Caco-2 (cell line): ENCODE measurements at regions of chr9 and their contacts with region 1.

Region 1: DNA sequence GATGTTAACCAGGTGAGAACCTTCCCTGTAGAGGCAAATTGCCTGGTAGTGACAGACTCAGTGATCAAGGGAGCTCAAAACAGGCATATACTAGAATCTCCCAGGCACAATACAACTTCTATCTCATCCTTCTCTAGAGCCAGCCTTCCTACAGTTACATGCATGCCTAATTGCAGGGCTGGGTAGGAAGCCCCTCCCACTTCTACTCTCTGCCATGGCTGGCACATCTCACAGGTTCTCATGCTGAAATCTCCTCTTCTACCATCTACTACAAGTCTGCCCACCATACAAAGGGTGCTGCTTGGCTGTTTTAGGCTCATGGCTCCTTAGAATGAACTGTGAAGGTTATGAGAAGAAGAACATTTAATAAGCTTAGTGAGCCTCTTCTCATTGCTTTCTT is 181.7 kb upstream of the ZNF462 start:
- DNase-seq: no peak
- H3K4me3 ChIP-seq: no peak overlapping the region
- H3K4me3 Mint-ChIP-seq: no peak overlapping the region
- H3K27ac Mint-ChIP-seq: no peak overlapping the region
- H3K4me1 ChIP-seq: 0 out of 2 replicates have a peak, but pooled peaks cover 6% of the 10 kb centered on the region
- H3K4me1 Mint-ChIP-seq: peaks cover 6% of the 10 kb centered on the region
- H3K27me3 ChIP-seq: no peaks in the 10 kb centered on the region
- H3K27me3 Mint-ChIP-seq: no peaks in the 10 kb centered on the region
- CTCF ChIP-seq: no peak

Region 2: GRCh38 chr9:106482733-106483132 is 198.6 kb before region 1 on chr9:
- CTCF ChIA-PET with region 1: no interaction called
- POLR2A ChIA-PET with region 1: no interaction called
- intact Hi-C with region 1: no loop called
- DNase-seq: no peak
- H3K4me3 ChIP-seq: no peak overlapping the region
- H3K4me3 Mint-ChIP-seq: no peak overlapping the region
- H3K27ac Mint-ChIP-seq: no peak overlapping the region
- H3K4me1 ChIP-seq: no peaks in the 10 kb centered on the region
- H3K4me1 Mint-ChIP-seq: no peaks in the 10 kb centered on the region
- H3K27me3 ChIP-seq: no peaks in the 10 kb centered on the region
- H3K27me3 Mint-ChIP-seq: no peaks in the 10 kb centered on the region
- CTCF ChIP-seq: no peak

Region 3: DNA sequence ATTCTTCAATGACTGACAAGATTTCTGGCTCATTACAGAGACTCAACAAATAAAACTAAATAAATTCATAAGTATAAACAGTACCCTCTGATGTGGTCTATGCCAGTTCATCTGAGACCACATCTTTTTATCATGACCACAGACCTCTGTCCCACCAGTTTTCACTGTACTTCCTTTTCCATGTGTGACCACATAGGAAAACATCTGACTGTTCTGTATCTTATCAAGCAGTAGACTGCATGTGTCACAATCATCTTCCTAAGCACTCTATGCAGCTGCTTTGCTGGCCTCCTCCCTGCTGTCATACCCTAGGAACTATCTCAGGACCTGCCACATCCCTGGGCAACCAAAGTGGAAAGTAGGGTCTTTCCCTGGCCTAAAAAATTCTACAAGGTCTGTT is 23.4 kb before region 1 on chr9:
- CTCF ChIA-PET with region 1: no interaction called
- POLR2A ChIA-PET with region 1: interaction called, 12 read pairs
- intact Hi-C with region 1: no loop called
- DNase-seq: no peak
- H3K4me3 ChIP-seq: no peak overlapping the region
- H3K4me3 Mint-ChIP-seq: no peak overlapping the region
- H3K27ac Mint-ChIP-seq: no peak overlapping the region
- H3K4me1 ChIP-seq: peaks cover 8% of the 10 kb centered on the region; the same call in 1 of the 2 replicates
- H3K4me1 Mint-ChIP-seq: peaks cover 21% of the 10 kb centered on the region
- H3K27me3 ChIP-seq: no peaks in the 10 kb centered on the region
- H3K27me3 Mint-ChIP-seq: peaks cover 2% of the 10 kb centered on the region
- CTCF ChIP-seq: no peak

Region 4: GRCh38 chr9:106700676-106701075 is 19.4 kb after region 1 on chr9:
- CTCF ChIA-PET with region 1: no interaction called
- POLR2A ChIA-PET with region 1: no interaction called
- intact Hi-C with region 1: no loop called
- DNase-seq: no peak
- H3K4me3 ChIP-seq: no peak overlapping the region
- H3K4me3 Mint-ChIP-seq: no peak overlapping the region
- H3K27ac Mint-ChIP-seq: no peak overlapping the region
- H3K4me1 ChIP-seq: no peaks in the 10 kb centered on the region
- H3K4me1 Mint-ChIP-seq: no peaks in the 10 kb centered on the region
- H3K27me3 ChIP-seq: no peaks in the 10 kb centered on the region
- H3K27me3 Mint-ChIP-seq: no peaks in the 10 kb centered on the region
- CTCF ChIP-seq: no peak